Endothelial cell of umbilical vein (primary cell): ENCODE measurements at regions of chr1 and their contacts with region 1.

Region 1: DNA sequence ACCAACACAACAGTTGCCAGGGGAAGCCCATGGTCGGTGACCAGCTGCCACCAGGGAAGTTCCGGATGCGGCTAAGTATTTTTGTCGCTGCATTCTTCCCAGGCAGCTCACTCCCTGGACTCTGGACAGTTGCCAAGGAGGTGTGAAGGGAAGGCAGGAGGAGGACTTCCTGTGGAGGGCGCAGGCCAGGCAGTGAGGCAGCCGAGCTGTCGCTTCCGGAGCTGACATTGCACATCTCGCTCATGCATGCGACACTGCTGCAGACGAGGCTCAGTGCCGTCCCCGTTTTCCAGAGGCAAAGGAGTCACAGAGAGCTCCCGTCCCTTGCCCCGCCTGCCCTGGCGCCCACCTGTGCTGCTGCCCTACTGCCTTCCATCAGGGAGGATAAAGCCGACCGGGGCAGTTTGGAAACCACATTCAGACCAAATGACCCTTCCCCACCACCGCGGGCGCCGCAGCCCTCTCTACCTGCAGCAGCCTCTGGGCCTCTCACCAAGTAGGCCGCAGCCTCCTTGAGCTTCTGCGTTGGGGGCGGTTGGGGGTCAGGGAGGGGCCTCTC is 81.4 kb downstream of the NENF start:
- DNase-seq: no peak
- H3K4me3 ChIP-seq: no peak overlapping the region
- H3K27ac ChIP-seq: no peak overlapping the region
- H3K4me1 ChIP-seq: peaks cover 10% of the 10 kb centered on the region
- H3K27me3 ChIP-seq: peaks cover 45 to 55% of the 10 kb centered on the region in 2 experiments
- CTCF ChIP-seq: no peak
- POLR2A ChIP-seq: no peak

Region 2: GRCh38 chr1:212469701-212470458 is 44.3 kb before region 1 on chr1:
- CTCF ChIA-PET with region 1: no interaction called
- POLR2A ChIA-PET with region 1: no interaction called
- dilution Hi-C with region 1: no loop called
- intact Hi-C with region 1: no loop called
- DNase-seq: no peak
- H3K4me3 ChIP-seq: no peak overlapping the region
- H3K27ac ChIP-seq: no peak overlapping the region
- H3K4me1 ChIP-seq: no peaks in the 10 kb centered on the region
- H3K27me3 ChIP-seq: peaks cover 2 to 7% of the 10 kb centered on the region in 2 experiments
- CTCF ChIP-seq: no peak
- POLR2A ChIP-seq: no peak

Region 3: DNA sequence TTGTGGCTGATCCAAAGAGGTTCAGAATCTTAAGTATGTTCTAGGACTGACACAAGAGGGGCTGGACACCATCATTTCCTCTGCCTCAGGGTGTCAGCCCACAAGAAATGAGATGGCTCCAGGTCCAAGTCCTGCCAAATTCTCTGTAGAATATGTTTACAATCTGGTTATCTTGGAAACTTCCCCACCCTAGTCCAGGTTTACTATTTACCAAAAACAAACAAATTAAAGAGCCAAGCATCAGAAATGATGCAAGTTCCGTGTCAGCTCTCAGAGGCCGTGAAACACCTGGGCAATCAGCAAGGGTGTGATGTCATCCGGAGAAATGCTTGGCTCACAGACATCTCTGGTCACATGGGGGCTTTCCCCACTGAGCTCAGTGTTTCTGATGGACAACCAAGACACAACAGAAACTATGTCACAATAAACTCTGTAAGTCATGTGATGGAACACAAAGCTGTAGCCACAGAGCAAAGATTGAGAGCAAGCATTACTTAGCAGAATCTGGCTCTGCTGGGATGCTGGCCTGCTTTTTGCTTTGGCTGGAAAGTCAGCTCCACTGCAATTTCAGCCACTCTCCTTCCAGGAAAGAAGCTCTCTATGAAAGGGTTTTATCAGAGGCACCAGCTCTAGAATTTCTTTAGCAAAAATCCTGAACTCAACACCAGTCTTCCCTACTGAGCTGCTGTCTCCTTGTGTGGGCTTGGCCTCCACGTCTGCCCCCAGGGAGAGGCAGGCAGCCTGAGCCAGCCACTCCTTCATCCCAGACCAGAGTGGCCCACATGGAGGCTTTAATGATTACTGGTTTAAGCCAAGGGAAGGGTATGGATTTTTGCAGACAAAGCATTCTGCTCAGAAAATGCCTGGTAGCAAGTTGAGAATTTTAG is 25.5 kb before region 1 on chr1:
- CTCF ChIA-PET with region 1: no interaction called
- POLR2A ChIA-PET with region 1: no interaction called
- dilution Hi-C with region 1: no loop called
- intact Hi-C with region 1: loop called (anchors 2 kb)
- DNase-seq: no peak
- H3K4me3 ChIP-seq: no peak overlapping the region
- H3K27ac ChIP-seq: no peak overlapping the region
- H3K4me1 ChIP-seq: no peaks in the 10 kb centered on the region
- H3K27me3 ChIP-seq: peaks cover 0 to 2% of the 10 kb centered on the region in 2 experiments
- CTCF ChIP-seq: no peak
- POLR2A ChIP-seq: no peak

Region 4: GRCh38 chr1:212545941-212546635 is 32.0 kb after region 1 on chr1:
- CTCF ChIA-PET with region 1: no interaction called
- POLR2A ChIA-PET with region 1: no interaction called
- dilution Hi-C with region 1: no loop called
- intact Hi-C with region 1: no loop called
- DNase-seq: no peak
- H3K4me3 ChIP-seq: no peak overlapping the region
- H3K27ac ChIP-seq: no peak overlapping the region
- H3K4me1 ChIP-seq: no peaks in the 10 kb centered on the region
- H3K27me3 ChIP-seq: peaks cover 12 to 19% of the 10 kb centered on the region in 2 experiments
- CTCF ChIP-seq: no peak
- POLR2A ChIP-seq: no peak

Region 5: DNA sequence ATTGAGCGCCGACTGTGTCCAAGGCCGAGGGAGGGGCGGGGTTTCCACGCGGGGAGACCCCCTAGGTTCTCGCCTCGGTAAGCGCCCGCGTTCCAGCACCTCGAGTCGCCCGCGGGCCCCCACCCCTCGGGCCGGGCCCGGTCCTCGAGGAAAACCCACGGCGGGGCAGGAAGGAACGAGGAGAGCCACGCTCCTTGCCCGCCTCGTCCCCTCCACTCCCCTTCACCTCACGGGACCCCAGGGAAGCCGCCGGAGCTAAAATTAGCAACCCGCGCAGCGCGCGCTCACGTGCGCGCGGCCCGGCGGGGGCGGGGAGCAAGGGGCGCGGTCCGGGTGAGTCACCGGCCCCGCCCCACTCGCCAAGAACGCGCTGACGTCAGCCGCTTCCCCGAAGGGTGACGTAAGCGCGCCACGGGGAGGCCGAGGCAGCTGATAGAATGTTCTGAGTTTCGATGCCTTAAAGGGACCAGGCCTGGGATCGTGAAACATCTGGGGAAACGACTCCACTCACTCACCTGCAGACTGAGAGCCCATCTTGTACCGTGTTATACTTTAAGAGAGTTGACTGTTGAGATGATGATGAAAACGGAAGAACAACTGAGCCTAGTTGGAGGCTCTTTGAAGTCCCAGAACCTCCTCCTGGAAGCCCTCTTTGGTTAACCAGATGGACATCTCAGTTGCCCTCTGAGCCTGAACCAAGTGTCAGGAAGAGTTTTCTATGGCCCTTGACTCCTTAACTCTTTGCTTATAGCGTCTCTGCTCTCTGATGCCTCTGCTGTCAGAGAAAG is 44.8 kb after region 1 on chr1:
- CTCF ChIA-PET with region 1: no interaction called
- POLR2A ChIA-PET with region 1: no interaction called
- dilution Hi-C with region 1: no loop called
- intact Hi-C with region 1: loop called (anchors 2 kb)
- DNase-seq: peak; percentile 84
- H3K4me3 ChIP-seq: peak overlapping the region; percentile 58 to 74 (median 68)
- H3K27ac ChIP-seq: peak overlapping the region; percentile 69
- H3K4me1 ChIP-seq: peaks cover 18% of the 10 kb centered on the region
- H3K27me3 ChIP-seq: peaks cover 4 to 5% of the 10 kb centered on the region in 2 experiments
- CTCF ChIP-seq: no peak
- POLR2A ChIP-seq: peak; percentile 43